ENCODE measurements at regions of chr1 and their contacts with region 1.

Region 1: DNA sequence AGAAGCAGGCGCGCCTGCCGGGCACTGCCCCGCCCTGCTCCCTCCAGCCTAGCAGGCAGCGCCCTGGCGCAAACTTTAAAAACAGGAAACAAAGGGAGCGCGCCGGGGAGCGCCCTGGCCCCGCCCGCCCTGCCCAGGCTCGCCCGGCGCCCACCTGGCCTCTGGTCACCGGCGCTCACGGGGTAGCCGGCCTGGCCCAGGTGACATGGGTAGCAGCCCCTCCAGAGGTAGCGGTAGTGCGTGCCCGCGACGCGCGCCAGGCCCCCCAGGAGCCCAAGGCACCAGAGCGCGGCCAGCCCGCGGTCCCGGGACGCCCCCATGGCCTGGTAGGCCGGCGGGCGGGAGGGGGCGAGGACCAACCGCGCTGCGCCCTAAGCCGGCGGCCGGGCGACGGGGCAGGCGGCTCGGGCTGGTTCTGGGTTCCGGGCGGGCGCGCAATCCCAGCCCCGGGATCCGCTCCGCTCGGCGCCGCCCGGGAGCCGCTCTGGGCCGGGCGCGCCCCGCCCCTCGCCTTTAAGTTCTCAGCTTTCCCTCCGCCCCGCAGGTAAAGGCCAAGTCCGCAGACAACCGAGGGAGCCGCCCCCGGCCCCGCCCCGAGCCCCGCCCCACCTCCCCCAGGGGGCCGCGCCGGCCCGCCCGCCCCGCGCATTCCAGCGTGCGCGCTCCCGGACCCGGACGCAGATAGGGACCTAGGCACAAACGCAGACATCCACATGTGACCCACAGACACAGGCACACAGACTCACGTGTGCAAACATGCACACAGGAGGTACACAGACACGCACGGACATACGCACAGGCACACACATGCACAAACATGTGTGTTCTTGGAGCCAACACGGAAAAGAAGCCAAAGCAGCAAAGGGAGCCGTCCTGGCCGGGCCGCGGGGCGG is 76.7 kb downstream of the ARHGEF16 start:
- DNase-seq: peak; percentile 77 to 84 (median 81)
- H3K4me3 ChIP-seq: peak overlapping the region; percentile 54 to 85
- H3K4me3 Mint-ChIP-seq: peak overlapping the region; percentile 82 to 94 (median 88)
- H3K27ac ChIP-seq: peak overlapping the region; percentile 54
- H3K27ac Mint-ChIP-seq: peak overlapping the region; percentile 54 to 99 (median 97)
- H3K4me1 ChIP-seq: peaks cover 16% of the 10 kb centered on the region
- H3K4me1 Mint-ChIP-seq: peaks cover 4 to 36% (median 18%) of the 10 kb centered on the region in 4 donors
- H3K27me3 ChIP-seq: no peaks in the 10 kb centered on the region
- H3K27me3 Mint-ChIP-seq: no peaks in the 10 kb centered on the region

Region 2: GRCh38 chr1:3501856-3502665 is 29.1 kb before region 1 on chr1:
- CTCF ChIA-PET with region 1: no interaction called
- POLR2A ChIA-PET with region 1: interaction called, 19 read pairs
- intact Hi-C with region 1: no loop called
- DNase-seq: no peak
- H3K4me3 ChIP-seq: no peak overlapping the region
- H3K4me3 Mint-ChIP-seq: no peak overlapping the region
- H3K27ac ChIP-seq: no peak overlapping the region
- H3K27ac Mint-ChIP-seq: no peak overlapping the region
- H3K4me1 ChIP-seq: no peaks in the 10 kb centered on the region
- H3K4me1 Mint-ChIP-seq: no peaks in the 10 kb centered on the region
- H3K27me3 ChIP-seq: no peaks in the 10 kb centered on the region
- H3K27me3 Mint-ChIP-seq: no peaks in the 10 kb centered on the region

Measured in CD4-positive, alpha-beta memory T cell (primary cell).